B cell (primary cell): ENCODE measurements at regions of chr14 and their contacts with region 1.

Region 1: GRCh38 chr14:75050852-75051554 is at the start of gene MLH3:
- DNase-seq: peak; percentile 90
- ATAC-seq: peak; percentile 83
- H3K4me3 ChIP-seq: peak within 1 kb of the TSS; percentile 44 to 82 (median 64)
- H3K4me3 Mint-ChIP-seq: peak within 1 kb of the TSS; percentile 97
- H3K27ac ChIP-seq: peak within 1 kb of the TSS in 1 of 2 donors; percentile 83
- H3K27ac Mint-ChIP-seq: peak within 1 kb of the TSS; percentile 96
- H3K4me1 ChIP-seq: peaks cover 9 to 10% of the 10 kb centered on the region in 2 donors
- H3K4me1 Mint-ChIP-seq: peaks cover 19% of the 10 kb centered on the region
- H3K27me3 ChIP-seq: no peaks in the 10 kb centered on the region
- H3K27me3 Mint-ChIP-seq: no peaks in the 10 kb centered on the region
- CTCF ChIP-seq: no peak
- total RNA-seq, gene MLH3: 19.9 and 28.2 TPM in 2 replicates

Region 2: DNA sequence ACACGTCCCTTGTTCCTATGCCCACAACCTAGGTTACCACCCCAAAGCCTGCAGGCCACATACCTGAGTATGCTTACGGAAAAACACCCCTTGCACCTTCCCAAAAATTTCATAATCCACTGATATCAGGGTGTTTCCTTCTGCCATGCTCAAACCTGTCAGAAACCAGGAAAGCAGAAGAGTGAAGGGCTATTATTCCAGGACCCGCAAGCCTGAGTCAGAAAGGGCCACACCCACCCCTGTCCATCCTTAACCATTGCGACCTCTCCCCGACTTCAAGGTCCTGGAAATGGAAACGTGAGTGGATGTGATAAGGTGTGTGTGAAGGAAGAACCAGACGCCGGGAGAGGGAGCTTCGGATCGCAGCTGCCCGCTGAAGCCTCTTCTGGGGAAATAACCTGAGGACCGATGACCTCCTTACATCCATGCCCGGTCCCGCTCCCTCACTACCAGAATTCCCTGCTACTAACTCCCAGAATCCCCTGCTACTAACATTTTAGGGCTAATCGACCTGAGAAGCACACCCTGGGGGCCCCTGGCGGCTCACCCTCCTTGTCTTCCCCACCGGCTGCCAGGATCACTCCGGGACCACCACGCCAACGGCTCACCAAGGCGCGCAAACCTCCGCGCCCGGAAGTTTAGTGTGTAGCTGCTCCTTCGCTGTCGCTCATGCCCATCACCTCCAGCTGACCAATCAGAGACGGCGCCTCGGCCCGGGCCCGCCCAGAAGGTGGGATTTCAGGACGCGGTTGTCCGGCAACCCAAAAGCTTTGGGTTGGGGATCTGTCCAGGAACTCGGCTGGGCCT is 12.6 kb after region 1 on chr14 and contains the start of gene ACYP1:
- CTCF ChIA-PET with region 1: interaction called, 3 read pairs
- POLR2A ChIA-PET with region 1: interaction called, 3 read pairs
- intact Hi-C with region 1: loop called (anchors 1 kb)
- DNase-seq: peak; percentile 91
- ATAC-seq: peak; percentile 99
- H3K4me3 ChIP-seq: peak within 1 kb of the TSS; percentile 72 to 100 (median 96)
- H3K4me3 Mint-ChIP-seq: peak within 1 kb of the TSS; percentile 100
- H3K27ac ChIP-seq: peak within 1 kb of the TSS; percentile 65 to 73
- H3K27ac Mint-ChIP-seq: peak within 1 kb of the TSS; percentile 95
- H3K4me1 ChIP-seq: peaks cover 12 to 16% of the 10 kb centered on the region in 2 donors
- H3K4me1 Mint-ChIP-seq: peaks cover 20% of the 10 kb centered on the region
- H3K27me3 ChIP-seq: no peaks in the 10 kb centered on the region
- H3K27me3 Mint-ChIP-seq: no peaks in the 10 kb centered on the region
- CTCF ChIP-seq: no peak
- total RNA-seq, gene ACYP1: 34.1 and 46.7 TPM in 2 replicates

Region 3: DNA sequence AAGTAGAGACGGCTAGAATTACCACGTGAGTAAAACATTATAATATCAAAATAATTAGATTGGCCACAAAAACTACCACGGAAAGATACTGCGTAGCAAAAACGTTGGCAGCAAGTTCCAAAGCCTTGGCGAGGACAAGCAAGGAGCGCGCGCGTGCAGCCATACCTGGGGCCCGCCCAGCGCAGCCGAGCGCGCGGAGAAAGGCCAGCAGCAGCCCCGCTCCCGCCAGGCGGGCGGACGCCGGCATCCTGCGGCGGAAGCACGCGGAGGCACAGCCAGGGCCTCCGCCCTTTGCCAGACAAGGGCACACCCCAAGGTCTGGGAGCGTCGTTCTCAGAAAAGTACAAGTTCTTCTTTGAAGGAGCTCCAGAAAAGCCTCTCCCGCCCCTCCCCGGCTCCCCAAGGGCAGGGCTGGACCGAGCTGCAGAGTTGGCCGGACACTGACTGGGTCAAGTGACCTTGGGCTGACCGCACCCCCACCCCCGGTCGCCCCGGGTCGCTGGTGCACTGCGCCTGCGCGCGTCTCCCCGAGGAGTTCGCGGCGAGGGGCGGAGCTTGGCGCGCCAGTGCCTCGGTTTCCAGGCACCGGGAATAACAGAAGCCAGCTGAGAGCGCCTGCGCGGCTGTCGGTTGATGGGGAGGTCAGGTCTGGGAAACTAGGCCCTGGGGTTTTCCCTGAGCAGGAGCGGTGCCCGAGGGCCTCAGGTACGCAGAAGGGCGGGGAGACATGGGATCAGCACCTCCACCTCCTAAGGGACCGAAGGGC is 18.2 kb after region 1 on chr14 and contains the start of gene ZC2HC1C:
- CTCF ChIA-PET with region 1: interaction called, 3 read pairs
- POLR2A ChIA-PET with region 1: interaction called, 3 read pairs
- intact Hi-C with region 1: loop called (anchors 1 kb)
- DNase-seq: peak; percentile 61
- ATAC-seq: peak; percentile 83
- H3K4me3 ChIP-seq: peak within 1 kb of the TSS; percentile 34 to 82 (median 63)
- H3K4me3 Mint-ChIP-seq: no peak within 1 kb of the TSS
- H3K27ac ChIP-seq: peak within 1 kb of the TSS in 1 of 2 donors; percentile 53
- H3K27ac Mint-ChIP-seq: peak within 1 kb of the TSS; percentile 80
- H3K4me1 ChIP-seq: peaks cover 8 to 18% of the 10 kb centered on the region in 2 donors
- H3K4me1 Mint-ChIP-seq: peaks cover 7% of the 10 kb centered on the region
- H3K27me3 ChIP-seq: no peaks in the 10 kb centered on the region
- H3K27me3 Mint-ChIP-seq: no peaks in the 10 kb centered on the region
- CTCF ChIP-seq: no peak
- total RNA-seq, gene ZC2HC1C: 0.46 and 0.59 TPM in 2 replicates

Region 4: GRCh38 chr14:75132382-75133086 is 81.5 kb after region 1 on chr14:
- CTCF ChIA-PET with region 1: no interaction called
- POLR2A ChIA-PET with region 1: no interaction called
- intact Hi-C with region 1: no loop called
- DNase-seq: peak; percentile 85
- ATAC-seq: peak; percentile 95
- H3K4me3 ChIP-seq: no peak overlapping the region
- H3K4me3 Mint-ChIP-seq: no peak overlapping the region
- H3K27ac ChIP-seq: peak overlapping the region in 1 of 2 donors; percentile 49
- H3K27ac Mint-ChIP-seq: peak overlapping the region; percentile 3
- H3K4me1 ChIP-seq: peaks cover 4 to 5% of the 10 kb centered on the region in 2 donors
- H3K4me1 Mint-ChIP-seq: peaks cover 14% of the 10 kb centered on the region
- H3K27me3 ChIP-seq: no peaks in the 10 kb centered on the region
- H3K27me3 Mint-ChIP-seq: no peaks in the 10 kb centered on the region
- CTCF ChIP-seq: peak; percentile 78